ENCODE measurements at regions of chr6 and their contacts with region 1.

Region 1: GRCh38 chr6:139764498-139764986 is 390.1 kb upstream of the CITED2 start:
- DNase-seq: peak; percentile 52 to 99
- H3K4me3 ChIP-seq: no peak overlapping the region
- H3K27ac ChIP-seq: peak overlapping the region; percentile 80
- H3K4me1 ChIP-seq: peaks cover 62% of the 10 kb centered on the region
- H3K27me3 ChIP-seq: no peaks in the 10 kb centered on the region
- CTCF ChIP-seq: no peak

Region 2: GRCh38 chr6:139708337-139709199 is 56.0 kb before region 1 on chr6:
- CTCF ChIA-PET with region 1: no interaction called
- POLR2A ChIA-PET with region 1: no interaction called
- intact Hi-C with region 1: loop called (anchors 2 kb)
- DNase-seq: peak; percentile 41 to 94
- H3K4me3 ChIP-seq: no peak overlapping the region
- H3K27ac ChIP-seq: peak overlapping the region; percentile 58
- H3K4me1 ChIP-seq: peaks cover 49% of the 10 kb centered on the region
- H3K27me3 ChIP-seq: no peaks in the 10 kb centered on the region
- CTCF ChIP-seq: no peak

Region 3: DNA sequence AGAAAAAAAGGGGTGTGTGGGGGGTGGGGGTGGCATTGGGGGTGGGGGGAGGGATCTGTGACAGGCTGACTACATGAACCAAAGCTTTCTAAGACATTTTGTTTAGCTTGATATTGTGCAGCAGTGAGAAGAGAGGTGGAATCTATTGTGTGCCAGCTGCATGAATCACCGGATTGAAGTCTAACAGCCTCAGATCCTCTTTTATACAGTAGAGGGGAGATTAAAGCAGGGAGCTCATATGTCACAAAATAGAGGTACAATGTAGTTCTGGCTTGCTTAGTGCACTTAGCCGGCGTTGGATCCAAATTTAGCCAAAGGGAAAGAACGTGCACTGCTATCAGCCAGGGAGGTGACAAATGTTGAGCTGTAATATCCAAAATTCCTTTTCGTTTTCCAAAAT is 14.1 kb after region 1 on chr6:
- CTCF ChIA-PET with region 1: no interaction called
- POLR2A ChIA-PET with region 1: no interaction called
- intact Hi-C with region 1: no loop called
- DNase-seq: no peak
- H3K4me3 ChIP-seq: no peak overlapping the region
- H3K27ac ChIP-seq: no peak overlapping the region
- H3K4me1 ChIP-seq: no peaks in the 10 kb centered on the region; the same call in 1 of the 2 replicates
- H3K27me3 ChIP-seq: no peaks in the 10 kb centered on the region
- CTCF ChIP-seq: no peak

Region 4: DNA sequence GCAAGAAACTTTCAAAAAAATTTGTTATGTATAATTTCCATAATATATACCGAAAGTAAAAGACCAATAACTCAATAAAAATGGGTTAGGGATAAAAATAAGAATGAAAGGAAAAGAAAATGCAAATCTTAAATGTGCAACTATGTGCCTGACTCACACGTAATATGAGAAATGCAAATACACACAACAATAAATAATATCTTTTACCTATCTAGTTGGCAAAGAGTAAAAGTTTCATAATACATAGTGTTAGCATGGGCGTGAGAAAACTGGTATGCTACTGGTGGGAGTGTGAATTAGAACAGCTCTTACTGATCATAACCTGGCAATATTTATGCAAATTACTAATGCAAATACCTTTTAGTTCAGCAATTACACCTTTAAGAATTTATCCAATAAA is 48.4 kb after region 1 on chr6:
- CTCF ChIA-PET with region 1: no interaction called
- POLR2A ChIA-PET with region 1: no interaction called
- intact Hi-C with region 1: no loop called
- DNase-seq: peak in 1 of 2 experiments; percentile 50
- H3K4me3 ChIP-seq: no peak overlapping the region
- H3K27ac ChIP-seq: no peak overlapping the region
- H3K4me1 ChIP-seq: no peaks in the 10 kb centered on the region
- H3K27me3 ChIP-seq: no peaks in the 10 kb centered on the region
- CTCF ChIP-seq: no peak

Region 5: GRCh38 chr6:139881728-139882211 is 117.2 kb after region 1 on chr6:
- CTCF ChIA-PET with region 1: no interaction called
- POLR2A ChIA-PET with region 1: no interaction called
- intact Hi-C with region 1: loop called (anchors 5 kb)
- DNase-seq: no peak
- H3K4me3 ChIP-seq: no peak overlapping the region
- H3K27ac ChIP-seq: no peak overlapping the region
- H3K4me1 ChIP-seq: peaks cover 22% of the 10 kb centered on the region
- H3K27me3 ChIP-seq: no peaks in the 10 kb centered on the region
- CTCF ChIP-seq: peak; percentile 81

Region 6: GRCh38 chr6:139981768-139982181 is 217.2 kb after region 1 on chr6:
- CTCF ChIA-PET with region 1: no interaction called
- POLR2A ChIA-PET with region 1: no interaction called
- intact Hi-C with region 1: loop called (anchors 5 kb)
- DNase-seq: peak in 1 of 2 experiments; percentile 59
- H3K4me3 ChIP-seq: no peak overlapping the region
- H3K27ac ChIP-seq: peak overlapping the region; percentile 24
- H3K4me1 ChIP-seq: peaks cover 50% of the 10 kb centered on the region
- H3K27me3 ChIP-seq: no peaks in the 10 kb centered on the region
- CTCF ChIP-seq: no peak

Region 7: DNA sequence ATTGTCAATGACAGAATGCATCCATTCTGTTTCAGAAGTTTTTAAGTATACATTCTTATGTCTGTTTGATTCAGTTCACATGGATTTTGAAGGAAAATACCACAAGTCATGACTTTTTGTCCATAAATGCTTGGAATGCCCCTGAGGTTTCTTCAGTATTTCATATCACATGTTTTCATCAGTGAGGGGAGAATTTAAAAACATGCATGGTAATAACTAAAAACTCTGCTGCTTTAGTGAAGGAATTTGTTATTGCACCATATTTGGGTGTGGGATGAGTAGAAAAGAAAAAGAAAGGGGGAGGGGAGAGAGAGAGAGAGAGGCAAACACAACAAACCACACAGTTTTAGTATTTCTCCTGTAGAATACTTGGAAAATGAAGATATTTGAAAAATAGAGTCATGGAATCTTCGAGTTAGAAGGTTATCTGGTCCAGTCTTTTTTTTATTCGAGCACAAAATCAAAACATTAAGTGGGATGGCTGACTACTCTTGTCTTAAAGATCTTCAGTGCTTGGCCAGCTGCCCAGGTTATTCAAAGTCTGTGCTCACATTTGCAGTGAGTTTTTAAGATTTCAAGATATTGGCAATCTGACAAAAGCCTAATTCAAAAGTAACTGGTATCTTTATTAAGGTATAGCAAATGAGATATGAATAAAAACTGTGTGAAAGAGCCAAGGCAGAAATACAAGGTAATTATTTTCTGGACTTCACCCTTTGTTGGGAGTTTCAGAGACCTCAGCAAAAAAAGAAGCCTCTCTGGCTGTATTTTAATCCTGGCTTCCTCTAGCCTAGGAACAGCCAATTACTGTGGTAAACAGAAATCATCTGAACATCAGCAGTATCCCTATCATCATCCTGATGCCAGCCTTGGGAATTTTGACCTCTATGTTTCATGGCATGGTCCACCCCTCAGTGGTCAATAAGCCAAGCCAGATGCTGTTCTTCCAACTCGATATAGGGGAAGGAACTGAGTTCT is 297.8 kb after region 1 on chr6:
- CTCF ChIA-PET with region 1: no interaction called
- POLR2A ChIA-PET with region 1: no interaction called
- intact Hi-C with region 1: loop called (anchors 2 kb)
- DNase-seq: peak; percentile 51 to 97
- H3K4me3 ChIP-seq: peak overlapping the region; percentile 4; the same call in 1 of the 2 replicates
- H3K27ac ChIP-seq: peak overlapping the region; percentile 66
- H3K4me1 ChIP-seq: peaks cover 32% of the 10 kb centered on the region
- H3K27me3 ChIP-seq: no peaks in the 10 kb centered on the region
- CTCF ChIP-seq: no peak

Measured in PC-9 (cell line).